Activated T-helper 2 cell treated with anti-CD3 and anti-CD28 coated beads, Interferon-gamma antibody, Interleukin-2, Interleukin-4, amounts not matched to agents 10 μg/mL and 5 μg/mL and 100 μg/mL, durations not matched to agents 14 hours and 24 hours and 36 hours (primary cell): ENCODE measurements at regions of chr11 and their contacts with region 1.

Region 1: DNA sequence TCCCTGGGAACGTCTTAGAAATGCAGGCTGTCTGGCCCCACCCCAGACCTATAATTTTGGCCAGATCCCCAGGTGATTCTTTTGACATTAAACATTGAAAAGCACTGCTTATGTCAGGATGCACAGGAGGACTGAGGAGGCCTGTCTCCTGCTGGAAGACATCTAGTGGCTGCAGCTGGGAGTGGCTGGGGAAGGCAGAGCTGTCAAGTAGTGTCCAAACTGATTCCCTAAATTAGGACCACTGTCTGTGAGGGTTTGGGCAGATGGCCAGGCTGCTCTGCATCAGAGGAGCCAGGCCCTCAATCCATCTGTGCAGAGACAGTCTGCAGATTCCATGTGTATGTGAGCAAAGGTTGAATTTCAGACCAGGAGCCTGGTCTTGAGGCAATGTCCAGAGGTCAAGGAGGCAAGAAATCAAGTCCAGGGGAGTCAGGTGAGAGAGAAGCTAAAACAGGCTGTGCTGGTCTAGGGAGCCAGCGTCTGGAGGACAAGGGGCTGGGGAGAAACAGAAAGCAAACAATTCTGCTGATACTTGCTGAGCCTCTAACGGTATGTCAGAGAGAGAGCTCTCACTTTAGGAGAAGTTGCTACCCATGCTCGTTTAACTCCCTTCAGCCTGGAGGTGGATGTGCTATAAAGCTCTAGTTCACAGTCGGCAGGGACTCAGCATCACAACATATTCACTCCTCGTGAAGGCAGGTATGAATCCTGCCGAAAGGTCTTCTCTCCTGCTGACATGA is 15.3 kb upstream of the SYTL2 start:
- DNase-seq: no peak
- H3K4me3 Mint-ChIP-seq: no peak overlapping the region
- H3K27ac Mint-ChIP-seq: peak overlapping the region; percentile 62
- H3K4me1 Mint-ChIP-seq: peaks cover 67% of the 10 kb centered on the region
- H3K27me3 Mint-ChIP-seq: no peaks in the 10 kb centered on the region

Region 2: DNA sequence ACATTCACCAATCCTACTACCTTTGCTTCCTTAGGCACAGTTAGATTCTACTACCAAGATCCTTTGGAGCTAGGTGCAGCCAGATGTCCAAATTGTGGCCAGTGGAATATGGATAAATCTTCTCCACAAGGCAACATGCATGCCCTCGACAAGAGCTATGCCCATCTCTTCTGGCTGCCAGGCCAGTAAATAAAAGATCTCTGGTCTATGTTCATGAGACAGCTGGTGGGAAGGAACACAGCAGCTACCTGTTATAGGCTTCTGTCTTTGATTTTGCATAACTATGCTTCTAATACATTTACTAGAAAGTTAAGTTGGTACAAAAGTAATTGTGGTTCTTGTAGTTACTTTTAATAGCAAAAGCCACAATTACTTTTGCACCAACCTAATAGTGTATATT is 381.8 kb before region 1 on chr11:
- intact Hi-C with region 1: no loop called
- DNase-seq: no peak
- H3K4me3 Mint-ChIP-seq: no peak overlapping the region
- H3K27ac Mint-ChIP-seq: no peak overlapping the region
- H3K4me1 Mint-ChIP-seq: no peaks in the 10 kb centered on the region
- H3K27me3 Mint-ChIP-seq: no peaks in the 10 kb centered on the region

Region 3: GRCh38 chr11:85647604-85648299 is 178.5 kb before region 1 on chr11 and contains the start of gene TMEM126A:
- intact Hi-C with region 1: loop called (anchors 5 kb)
- DNase-seq: peak; percentile 86
- H3K4me3 Mint-ChIP-seq: peak within 1 kb of the TSS; percentile 95
- H3K27ac Mint-ChIP-seq: peak within 1 kb of the TSS; percentile 92
- H3K4me1 Mint-ChIP-seq: peaks cover 19% of the 10 kb centered on the region
- H3K27me3 Mint-ChIP-seq: peaks cover 16% of the 10 kb centered on the region
- total RNA-seq, gene TMEM126A: 48.9 and 49.3 TPM in 2 replicates

Region 4: DNA sequence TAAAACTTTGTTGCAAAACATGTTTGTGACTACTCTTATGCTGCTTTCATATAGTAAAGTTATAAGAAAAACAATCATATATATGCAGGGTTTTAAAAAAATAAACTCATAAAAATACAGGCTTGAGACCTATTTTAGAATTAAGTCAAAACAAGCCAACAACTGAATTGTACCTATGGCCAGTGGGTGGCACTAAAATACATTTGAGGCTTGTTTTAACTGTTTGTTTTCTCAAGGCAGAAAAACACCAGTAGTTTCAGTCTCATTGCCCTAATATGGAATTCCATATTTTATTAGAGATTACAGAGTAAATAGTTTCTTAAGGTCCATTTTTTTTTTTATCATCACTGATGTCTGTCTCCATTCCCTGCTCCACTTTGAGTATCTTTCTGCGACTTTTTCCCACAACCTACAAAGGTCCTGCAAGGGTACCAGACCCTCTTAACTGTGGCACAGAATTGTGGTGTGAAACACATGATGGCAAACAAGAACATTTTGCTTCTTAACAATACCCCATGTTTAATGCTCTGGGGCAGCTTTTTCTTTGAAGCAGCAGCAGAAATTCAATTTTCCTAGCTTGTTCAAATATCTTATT is 131.8 kb before region 1 on chr11:
- intact Hi-C with region 1: loop called (anchors 1 kb)
- DNase-seq: no peak
- H3K4me3 Mint-ChIP-seq: no peak overlapping the region
- H3K27ac Mint-ChIP-seq: no peak overlapping the region
- H3K4me1 Mint-ChIP-seq: peaks cover 43% of the 10 kb centered on the region
- H3K27me3 Mint-ChIP-seq: peaks cover 7% of the 10 kb centered on the region

Region 5: GRCh38 chr11:85779956-85780640 is 46.2 kb before region 1 on chr11:
- intact Hi-C with region 1: loop called (anchors 5 kb)
- DNase-seq: no peak
- H3K4me3 Mint-ChIP-seq: no peak overlapping the region
- H3K27ac Mint-ChIP-seq: peak overlapping the region; percentile 13
- H3K4me1 Mint-ChIP-seq: peaks cover 46% of the 10 kb centered on the region
- H3K27me3 Mint-ChIP-seq: no peaks in the 10 kb centered on the region

Region 6: DNA sequence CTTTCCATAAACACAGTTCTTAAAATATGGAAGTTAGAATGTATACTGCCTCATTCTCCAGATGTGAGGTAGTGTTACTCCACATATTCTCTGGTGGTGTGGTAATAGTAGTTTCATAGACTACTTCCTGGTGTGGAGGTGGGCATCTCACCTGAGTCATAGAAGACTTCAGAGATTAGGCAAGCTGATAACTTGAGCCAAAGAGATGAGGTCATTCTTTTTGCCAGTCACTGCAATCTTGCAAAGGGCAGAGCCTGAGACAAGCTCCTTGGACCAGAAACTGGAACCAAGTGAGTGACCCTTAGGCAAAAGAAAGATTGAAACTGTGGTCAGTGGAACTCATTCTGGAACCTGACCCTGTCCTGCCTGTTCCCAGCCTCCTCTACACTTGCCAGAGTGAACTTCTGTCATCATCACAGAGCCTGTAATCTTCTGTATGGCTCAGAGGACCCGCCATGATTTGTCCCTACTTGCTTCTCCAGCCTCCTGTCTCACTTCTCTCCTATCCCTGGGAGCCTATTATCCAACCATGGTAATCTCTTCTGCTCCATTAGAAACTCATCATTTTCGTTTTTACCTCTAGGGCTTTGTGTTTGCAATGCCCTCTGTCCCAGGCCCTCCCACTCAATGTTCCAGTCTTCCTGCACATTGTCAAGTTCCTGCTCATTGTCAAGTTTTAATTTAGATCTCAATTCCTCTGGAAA is 18.3 kb after region 1 on chr11:
- intact Hi-C with region 1: loop called (anchors 2 kb)
- DNase-seq: no peak
- H3K4me3 Mint-ChIP-seq: no peak overlapping the region
- H3K27ac Mint-ChIP-seq: no peak overlapping the region
- H3K4me1 Mint-ChIP-seq: peaks cover 23% of the 10 kb centered on the region
- H3K27me3 Mint-ChIP-seq: no peaks in the 10 kb centered on the region

Region 7: DNA sequence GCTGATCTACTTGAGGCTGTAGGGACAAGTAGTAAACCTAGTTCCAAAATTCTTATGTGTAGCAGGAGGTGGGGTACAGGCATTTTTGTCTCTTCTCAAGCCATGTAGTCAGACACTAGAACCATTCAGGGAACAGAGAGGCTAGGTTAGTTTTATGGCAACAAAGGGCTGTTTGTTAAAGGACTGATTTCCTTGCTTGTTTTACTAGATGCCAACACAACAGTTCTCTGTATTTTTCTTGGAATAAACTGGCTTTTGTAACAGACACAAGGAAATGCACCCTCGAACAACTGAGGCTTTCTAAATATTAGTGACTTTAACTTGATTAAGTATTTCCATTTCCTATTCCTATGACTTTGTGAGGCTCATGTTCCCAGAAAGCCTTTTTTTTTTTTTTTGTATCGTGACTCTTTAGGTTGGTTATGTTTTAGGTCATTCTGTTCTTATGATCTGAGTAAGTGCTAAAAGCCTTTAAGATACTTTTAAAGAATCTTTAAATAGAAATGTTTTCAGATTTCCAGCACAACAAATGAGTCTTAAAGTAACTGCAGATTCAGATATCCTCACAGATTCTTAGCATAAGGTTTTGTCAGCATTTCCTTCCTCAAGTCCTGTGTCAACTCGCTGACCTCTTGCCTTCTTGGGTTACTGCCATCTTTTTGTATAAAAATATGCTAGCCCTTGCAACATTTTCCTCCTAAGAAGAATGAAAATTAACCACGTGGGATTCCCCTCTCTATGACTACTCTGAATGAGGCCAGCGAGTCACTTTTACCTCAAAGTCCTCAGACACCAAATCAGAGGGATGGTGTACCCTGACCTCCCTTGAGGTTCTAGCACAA is 121.4 kb after region 1 on chr11:
- intact Hi-C with region 1: loop called (anchors 5 kb)
- DNase-seq: no peak
- H3K4me3 Mint-ChIP-seq: peak overlapping the region; percentile 15
- H3K27ac Mint-ChIP-seq: peak overlapping the region; percentile 75
- H3K4me1 Mint-ChIP-seq: peaks cover 35% of the 10 kb centered on the region
- H3K27me3 Mint-ChIP-seq: no peaks in the 10 kb centered on the region

Region 8: GRCh38 chr11:86218125-86219084 is 392.1 kb after region 1 on chr11:
- intact Hi-C with region 1: loop called (anchors 5 kb)
- DNase-seq: peak; percentile 49
- H3K4me3 Mint-ChIP-seq: peak overlapping the region; percentile 13
- H3K27ac Mint-ChIP-seq: peak overlapping the region; percentile 70
- H3K4me1 Mint-ChIP-seq: peaks cover 67% of the 10 kb centered on the region
- H3K27me3 Mint-ChIP-seq: no peaks in the 10 kb centered on the region